ENCODE measurements at regions of chr13 and their contacts with region 1.

Region 1: DNA sequence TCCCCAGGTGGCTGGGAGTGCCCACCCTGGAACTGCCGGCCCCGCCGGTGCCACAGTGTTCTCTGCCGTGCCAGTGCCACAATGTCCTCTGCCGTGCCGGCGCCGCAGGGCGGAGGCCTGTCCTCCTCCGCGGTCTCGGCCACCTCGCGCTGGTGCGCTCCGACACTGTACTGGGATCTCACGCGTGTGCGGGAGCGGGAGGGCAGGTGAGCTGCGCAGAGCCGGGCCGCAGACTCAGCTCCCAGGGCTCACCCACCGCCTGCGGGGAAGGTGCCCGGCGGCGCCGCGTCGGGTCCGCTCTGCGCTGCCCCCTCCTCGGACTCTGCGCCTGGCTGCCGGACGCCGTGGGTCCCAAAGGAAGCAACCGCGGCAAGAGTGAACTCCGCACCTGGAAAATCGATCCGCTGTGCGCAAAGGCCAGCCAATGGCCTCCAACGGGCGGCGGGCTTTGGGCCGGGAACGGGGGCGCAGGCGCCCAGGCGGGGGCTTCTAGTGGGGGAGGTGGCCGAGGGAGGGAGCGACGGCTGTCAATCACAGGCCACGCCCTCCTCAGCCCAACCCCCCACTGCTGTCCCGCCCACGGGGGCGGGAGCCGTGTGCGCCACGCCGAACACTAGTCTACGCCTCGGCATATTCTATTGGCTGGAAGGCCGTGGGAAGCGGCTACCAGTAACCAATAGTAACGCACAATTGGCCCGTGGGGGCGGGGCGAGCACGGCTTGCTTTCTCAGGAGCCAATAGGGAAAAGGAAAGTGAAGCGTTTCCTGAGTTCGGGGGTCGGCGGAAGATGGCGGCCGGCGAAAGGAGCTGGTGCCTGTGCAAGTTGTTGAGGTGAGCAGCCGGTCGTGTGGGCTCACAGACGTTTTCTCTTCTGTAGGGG is at the start of gene ALG11:
- DNase-seq: peak; percentile 100
- ATAC-seq: peak; percentile 100
- total RNA-seq, gene ALG11: 43.5 TPM

Region 2: GRCh38 chr13:51663973-51664957 is 347.6 kb before region 1 on chr13:
- intact Hi-C with region 1: no loop called
- DNase-seq: no peak
- ATAC-seq: peak; percentile 69

Region 3: DNA sequence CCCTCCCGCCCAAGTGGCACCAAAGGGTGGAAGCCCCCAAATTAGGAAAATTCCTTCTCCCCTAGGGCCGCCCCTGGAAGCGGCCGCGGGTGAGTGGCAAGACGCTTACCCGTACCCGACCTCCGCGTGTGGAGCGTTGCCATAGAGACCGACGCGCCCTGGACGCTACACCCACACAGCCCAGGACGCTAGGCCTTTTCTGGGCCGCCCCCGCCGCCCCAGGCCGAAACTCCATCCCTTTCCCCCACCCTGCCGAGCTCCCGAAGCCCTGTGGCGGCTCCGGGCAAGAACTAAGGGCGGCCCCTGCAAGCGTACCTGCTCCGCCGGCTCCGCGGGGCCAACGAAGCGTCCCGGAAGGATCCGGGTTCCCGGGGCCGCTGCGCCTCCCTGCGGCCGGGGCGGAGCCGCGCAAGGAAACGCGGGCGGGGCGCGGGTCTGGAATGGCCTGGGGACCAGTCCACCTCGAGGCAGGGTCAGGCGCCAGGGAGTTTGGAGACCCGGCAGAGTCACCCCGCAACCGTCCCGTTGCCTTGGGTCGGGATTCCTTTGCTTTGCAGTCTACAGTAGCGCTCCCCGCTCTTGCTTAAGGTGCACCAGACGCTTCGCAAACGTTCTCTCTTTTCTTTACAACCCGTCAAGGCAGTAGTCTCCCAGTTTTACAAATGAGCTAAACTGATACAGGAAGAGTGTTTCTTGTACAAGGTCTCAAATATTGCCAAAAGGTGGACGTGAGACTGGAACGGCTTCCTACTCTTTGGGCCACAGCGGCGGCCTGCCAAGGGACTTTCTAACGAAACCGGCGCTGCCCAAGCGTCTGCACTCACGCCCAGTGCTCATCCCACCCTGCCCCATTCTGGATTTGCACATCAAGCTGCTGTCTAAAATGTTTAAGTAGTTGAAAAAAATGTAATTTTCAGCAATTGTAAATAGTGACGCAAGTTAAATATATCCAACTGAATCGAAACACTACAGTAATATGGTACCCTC is 117.1 kb after region 1 on chr13 and contains the start of gene NEK5:
- intact Hi-C with region 1: loop called (anchors 10 kb)
- DNase-seq: peak; percentile 77
- ATAC-seq: peak; percentile 90
- total RNA-seq, gene NEK5: 0.36 TPM